Heart right ventricle (tissue), 16 donors: ENCODE measurements at regions of chr3 and their contacts with region 1.

Region 1: DNA sequence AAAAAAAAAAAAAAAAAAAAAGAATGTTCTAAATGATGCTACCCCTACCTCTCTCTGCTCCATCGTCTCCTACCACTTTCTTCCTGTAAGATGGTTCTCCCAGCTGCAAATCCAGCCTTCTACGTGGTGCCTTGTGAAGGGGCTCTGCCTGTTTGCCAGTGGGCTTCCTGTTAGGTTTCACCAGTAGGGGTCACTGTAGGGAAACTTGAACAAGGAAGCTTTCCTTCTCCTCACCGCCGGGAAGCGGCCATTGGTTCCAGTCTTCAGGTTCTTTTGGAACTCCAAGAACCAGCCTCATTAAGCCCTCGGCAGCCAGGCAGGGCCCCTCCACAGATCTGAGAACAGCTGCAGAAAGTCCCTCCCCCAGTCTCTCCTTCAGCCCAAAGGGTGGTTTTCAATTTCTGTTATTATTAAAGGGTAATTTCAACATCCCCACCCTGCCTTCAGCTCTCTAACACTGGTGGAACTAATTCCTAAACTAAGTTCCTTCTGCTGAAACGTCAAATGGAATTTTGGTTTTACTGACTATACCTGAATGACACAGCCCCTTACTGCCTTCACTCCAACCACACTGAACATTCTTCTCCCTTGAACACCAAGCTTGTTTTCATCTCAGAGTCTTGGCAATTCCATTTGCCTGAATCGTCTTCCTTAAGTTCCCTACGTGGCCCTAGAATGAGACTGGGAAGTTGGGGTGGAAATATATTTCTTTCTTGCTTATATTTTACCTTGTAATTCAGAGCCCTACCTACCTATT is 13.5 kb downstream of the MCCC1 start:
- DNase-seq: no peak
- ATAC-seq: no peak
- H3K4me3 ChIP-seq: no peak overlapping the region
- H3K27ac ChIP-seq: no peak overlapping the region
- H3K4me1 ChIP-seq: no peaks in the 10 kb centered on the region
- H3K27me3 ChIP-seq: no peaks in the 10 kb centered on the region
- CTCF ChIP-seq: peak in 5 of 9 donors; percentile 22 to 53 (median 27)

Region 2: DNA sequence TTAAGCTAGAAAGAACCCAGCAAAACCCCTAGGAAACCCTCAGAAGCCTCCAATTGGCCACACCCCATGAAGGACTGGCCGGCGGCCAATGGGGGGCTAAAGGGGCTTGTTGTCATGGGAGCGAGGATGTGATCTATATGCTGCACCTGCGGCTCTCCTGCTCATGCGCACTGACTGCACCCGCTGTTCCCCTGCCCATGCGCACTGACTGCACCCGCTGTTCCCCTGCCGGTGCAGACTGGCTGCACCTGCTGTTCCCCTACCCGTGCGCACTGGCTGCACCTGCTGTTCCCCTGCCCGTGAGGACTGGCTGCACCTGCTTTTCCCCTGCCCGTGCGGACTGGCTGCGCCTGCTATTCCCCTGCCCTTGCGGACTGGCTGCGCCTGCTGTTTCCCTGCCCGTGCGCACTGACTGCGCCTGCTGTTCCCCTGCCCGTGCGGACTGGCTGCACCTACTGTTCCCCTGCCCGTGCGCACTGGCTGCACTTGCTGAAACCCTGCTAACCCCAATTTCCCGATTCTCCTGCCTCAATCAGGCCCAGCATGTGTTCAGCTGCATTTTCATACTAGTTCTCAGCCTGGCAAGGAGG is 30.3 kb after region 1 on chr3:
- intact Hi-C with region 1: loop called in 1 of 10 experiments (anchors 2 kb)
- DNase-seq: no peak
- ATAC-seq: peak in 5 of 8 donors; percentile 38 to 71 (median 57)
- H3K4me3 ChIP-seq: peak overlapping the region in 5 of 10 donors; percentile 28 to 29 (median 28)
- H3K27ac ChIP-seq: no peak overlapping the region
- H3K4me1 ChIP-seq: peaks cover 0 to 14% (median 0%) of the 10 kb centered on the region in 9 donors
- H3K27me3 ChIP-seq: peaks cover 0 to 71% (median 55%) of the 10 kb centered on the region in 7 donors
- CTCF ChIP-seq: no peak